ENCODE measurements at regions of chr19 and their contacts with region 1.

Region 1: GRCh38 chr19:27805848-27806247 is 1407.1 kb downstream of the UQCRFS1 start:
- DNase-seq: no peak
- ATAC-seq: no peak; a peak in 1 of 6 replicates
- H3K4me3 ChIP-seq: no peak overlapping the region
- H3K27ac ChIP-seq: no peak overlapping the region
- H3K4me1 ChIP-seq: no peaks in the 10 kb centered on the region
- CTCF ChIP-seq: no peak
- EP300 ChIP-seq: no peak
- POLR2A ChIP-seq: no peak
- RAD21 ChIP-seq: no peak

Region 2: DNA sequence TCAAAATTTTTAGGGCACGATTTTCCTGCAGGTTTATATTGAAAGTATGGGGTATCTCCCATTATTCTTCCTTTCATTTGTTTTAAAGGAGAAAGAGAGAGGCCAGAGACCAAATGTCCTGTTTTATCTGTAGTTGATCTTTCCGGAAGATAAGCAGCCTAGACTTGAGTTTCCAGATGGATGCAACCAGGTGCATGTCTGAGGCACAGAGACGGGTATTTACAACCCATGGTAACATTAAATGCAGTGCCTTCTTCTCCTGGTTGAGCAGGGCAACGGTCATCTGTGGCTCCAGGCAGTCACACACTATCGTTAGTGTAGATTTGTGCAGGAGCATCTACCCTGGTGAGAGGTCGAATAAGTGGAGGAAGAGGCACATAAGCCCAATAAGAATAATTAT is 100.0 kb before region 1 on chr19:
- CTCF ChIA-PET with region 1: no interaction called
- POLR2A ChIA-PET with region 1: no interaction called
- DNase-seq: no peak
- ATAC-seq: no peak
- H3K4me3 ChIP-seq: no peak overlapping the region
- H3K27ac ChIP-seq: no peak overlapping the region
- H3K4me1 ChIP-seq: no peaks in the 10 kb centered on the region
- CTCF ChIP-seq: no peak
- EP300 ChIP-seq: no peak
- POLR2A ChIP-seq: no peak
- RAD21 ChIP-seq: no peak

Region 3: DNA sequence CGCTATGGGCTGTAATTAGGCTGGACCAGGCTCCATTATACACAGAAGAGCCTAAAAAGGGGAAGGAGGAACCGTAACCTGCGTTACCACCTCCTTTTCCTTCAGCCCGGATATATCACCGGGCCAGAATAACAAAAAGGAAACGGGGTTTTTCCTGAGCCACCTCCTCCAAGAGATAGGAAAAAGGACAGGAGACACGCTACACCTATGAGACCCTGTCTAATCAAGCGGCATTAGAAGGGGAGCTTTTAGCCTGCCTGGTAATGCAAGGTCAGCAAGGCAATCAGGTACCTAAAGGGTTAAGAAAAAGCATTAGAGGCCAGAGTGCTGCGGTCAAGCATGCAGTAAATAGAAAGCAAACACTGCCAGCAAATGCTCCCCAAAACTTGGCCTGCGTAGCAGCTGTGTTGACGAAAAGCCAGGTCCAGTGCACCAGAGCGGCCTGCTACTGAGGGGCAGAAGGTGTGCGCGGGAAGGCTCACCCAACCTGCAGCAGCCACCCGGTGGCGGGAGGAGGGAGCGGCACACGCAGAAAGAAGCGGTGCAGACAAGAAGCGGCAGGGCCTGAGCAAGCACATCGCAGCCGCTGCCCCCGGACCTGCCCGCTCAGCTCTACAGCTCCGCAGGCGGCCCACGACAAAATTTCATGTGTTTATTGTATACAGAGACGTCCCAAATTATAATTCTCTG is 59.0 kb before region 1 on chr19:
- CTCF ChIA-PET with region 1: no interaction called
- POLR2A ChIA-PET with region 1: no interaction called
- DNase-seq: peak; percentile 19 to 33
- ATAC-seq: peak; percentile 66 to 92
- H3K4me3 ChIP-seq: no peak overlapping the region
- H3K27ac ChIP-seq: no peak overlapping the region
- H3K4me1 ChIP-seq: no peaks in the 10 kb centered on the region
- CTCF ChIP-seq: no peak
- EP300 ChIP-seq: no peak
- POLR2A ChIP-seq: no peak
- RAD21 ChIP-seq: no peak

Region 4: GRCh38 chr19:27793644-27794493 is 12.0 kb before region 1 on chr19:
- CTCF ChIA-PET with region 1: interaction called, 13 read pairs
- POLR2A ChIA-PET with region 1: interaction called, 7 read pairs
- DNase-seq: peak; percentile 99
- ATAC-seq: peak; percentile 93 to 97
- H3K4me3 ChIP-seq: peak overlapping the region; percentile 81
- H3K27ac ChIP-seq: peak overlapping the region; percentile 89
- H3K4me1 ChIP-seq: peaks cover 8% of the 10 kb centered on the region; the same call in 1 of the 3 replicates
- CTCF ChIP-seq: no peak
- EP300 ChIP-seq: no peak
- POLR2A ChIP-seq: peak; percentile 92
- RAD21 ChIP-seq: no peak

Measured in A549 (cell line).